Mammary epithelial cell (primary cell): ENCODE measurements at regions of chr6 and their contacts with region 1.

Region 1: DNA sequence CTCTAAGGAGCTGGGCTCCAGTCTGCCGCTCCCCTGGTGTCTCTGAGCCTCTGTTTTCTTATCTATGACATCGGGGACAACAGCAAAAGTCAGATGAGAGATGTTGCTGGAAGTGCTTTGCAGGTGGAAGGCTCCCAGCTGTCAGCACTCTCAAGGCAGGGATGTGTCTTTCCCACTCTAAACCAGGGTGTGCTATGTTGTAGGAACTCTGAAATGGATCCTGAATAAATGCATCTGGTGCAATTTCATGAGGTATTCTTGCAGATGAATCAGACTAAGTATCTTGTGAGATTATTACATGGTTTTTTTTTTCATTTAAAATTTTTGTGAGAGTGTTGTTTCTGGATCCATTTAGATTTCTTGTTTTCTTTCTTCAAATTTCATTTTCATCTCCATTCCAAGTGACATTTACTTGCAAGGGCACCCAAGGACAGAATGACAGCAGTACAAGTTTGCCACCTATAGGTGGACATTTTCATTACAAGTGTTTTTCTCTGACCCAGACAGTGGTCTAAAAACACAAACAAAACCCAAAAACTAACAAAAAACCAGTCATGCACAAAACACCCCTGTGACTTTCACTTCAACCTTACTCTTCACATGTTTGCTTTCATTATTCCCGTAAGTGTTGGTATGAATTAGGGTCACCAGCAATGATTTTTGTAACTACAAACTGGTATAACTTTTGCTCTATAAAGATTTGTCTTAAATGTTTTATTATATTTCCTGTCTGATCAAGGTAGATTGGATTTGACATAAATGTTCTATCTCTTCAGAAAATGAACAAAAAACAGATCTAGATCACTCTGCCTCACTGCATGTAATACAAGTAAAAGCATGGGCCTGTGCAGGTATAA is 14.7 kb upstream of the SIM1 start:
- DNase-seq: no peak
- H3K4me3 ChIP-seq: no peak overlapping the region
- H3K27ac ChIP-seq: no peak overlapping the region
- H3K4me1 ChIP-seq: no peaks in the 10 kb centered on the region
- H3K27me3 ChIP-seq: no peaks in the 10 kb centered on the region
- CTCF ChIP-seq: peak; percentile 70 to 76

Region 2: GRCh38 chr6:100105138-100105753 is 374.2 kb before region 1 on chr6:
- CTCF ChIA-PET with region 1: no interaction called
- dilution Hi-C with region 1: loop called (anchors 25 kb)
- in situ Hi-C with region 1: loop called (anchors 5 kb)
- intact Hi-C with region 1: loop called (anchors 2 kb)
- DNase-seq: no peak
- H3K4me3 ChIP-seq: no peak overlapping the region
- H3K27ac ChIP-seq: no peak overlapping the region
- H3K4me1 ChIP-seq: no peaks in the 10 kb centered on the region
- H3K27me3 ChIP-seq: peaks cover 3% of the 10 kb centered on the region
- CTCF ChIP-seq: no peak

Region 3: DNA sequence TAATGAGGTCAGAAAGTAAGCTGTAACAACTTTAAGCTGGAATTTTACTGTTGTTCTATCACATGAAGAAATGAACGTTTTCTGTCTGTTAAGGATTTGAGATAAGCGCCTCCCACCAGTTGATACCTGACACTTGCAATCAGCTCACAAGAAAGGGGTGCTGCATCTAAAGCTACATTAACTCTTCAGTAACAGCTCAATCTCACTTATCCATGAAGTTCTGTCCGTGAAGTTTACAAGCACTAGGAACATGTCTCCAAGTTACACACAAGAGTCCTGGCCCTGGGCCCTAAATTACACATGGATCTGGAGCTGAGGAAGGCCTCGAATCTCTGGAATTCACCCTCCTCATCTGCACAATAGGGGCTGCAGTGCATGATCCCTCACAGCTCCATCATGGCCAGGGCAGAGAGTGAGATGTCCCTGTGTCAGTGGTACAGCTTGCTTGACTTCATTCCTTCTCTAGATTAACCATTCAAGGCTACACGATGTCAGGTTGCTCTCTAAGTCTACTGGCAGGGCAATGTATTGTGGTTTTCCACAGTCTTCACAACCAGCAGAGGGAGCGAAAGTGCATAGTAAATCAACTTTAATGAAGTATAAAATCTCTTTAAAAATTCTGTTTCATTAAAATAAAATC is 303.0 kb before region 1 on chr6:
- CTCF ChIA-PET with region 1: no interaction called
- dilution Hi-C with region 1: no loop called
- in situ Hi-C with region 1: no loop called
- intact Hi-C with region 1: loop called (anchors 1 kb)
- DNase-seq: peak; percentile 30
- H3K4me3 ChIP-seq: no peak overlapping the region
- H3K27ac ChIP-seq: no peak overlapping the region
- H3K4me1 ChIP-seq: peaks cover 24% of the 10 kb centered on the region
- H3K27me3 ChIP-seq: no peaks in the 10 kb centered on the region
- CTCF ChIP-seq: peak; percentile 27 to 60

Region 4: DNA sequence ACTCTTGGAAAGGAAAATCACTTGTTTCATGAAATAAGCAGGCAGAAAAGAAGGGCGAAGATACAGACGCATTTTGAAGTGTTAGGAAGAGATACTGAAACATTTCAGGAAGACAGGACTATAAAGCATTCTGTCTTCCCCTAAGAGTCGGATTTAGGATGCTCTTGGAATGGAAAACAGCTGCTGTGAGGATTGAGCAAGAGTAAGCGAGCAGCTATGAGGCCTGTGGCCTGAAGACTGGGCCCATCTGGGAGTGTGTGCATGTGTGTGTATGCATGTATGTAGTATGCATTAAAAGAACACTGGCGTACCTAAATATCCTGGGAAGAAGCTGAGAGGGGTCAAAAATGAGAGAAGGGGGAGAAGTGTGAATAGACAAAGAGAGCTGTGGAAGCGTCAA is 98.3 kb before region 1 on chr6:
- CTCF ChIA-PET with region 1: no interaction called
- dilution Hi-C with region 1: no loop called
- in situ Hi-C with region 1: no loop called
- intact Hi-C with region 1: loop called (anchors 5 kb)
- DNase-seq: no peak
- H3K4me3 ChIP-seq: no peak overlapping the region
- H3K27ac ChIP-seq: no peak overlapping the region
- H3K4me1 ChIP-seq: peaks cover 20% of the 10 kb centered on the region
- H3K27me3 ChIP-seq: no peaks in the 10 kb centered on the region
- CTCF ChIP-seq: no peak

Region 5: DNA sequence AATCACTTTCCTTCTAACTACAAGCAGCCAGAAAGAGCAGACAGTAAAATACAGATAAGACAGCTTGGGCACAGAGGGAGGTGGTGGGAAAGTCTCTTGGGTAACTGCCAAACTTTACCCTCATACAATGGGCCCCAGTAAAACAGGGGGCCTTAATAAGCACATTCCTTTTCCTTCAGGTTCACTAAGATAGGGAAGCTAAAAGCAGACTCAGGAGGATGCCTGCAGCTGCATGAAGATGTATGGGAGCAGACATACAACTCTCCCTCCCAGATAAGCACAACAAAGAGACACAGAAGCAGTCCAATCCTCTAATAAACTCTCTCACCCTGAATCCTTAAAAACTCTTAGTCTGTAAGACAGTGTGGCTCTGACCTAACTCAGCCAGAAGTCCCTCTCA is 63.6 kb before region 1 on chr6:
- CTCF ChIA-PET with region 1: no interaction called
- dilution Hi-C with region 1: no loop called
- in situ Hi-C with region 1: no loop called
- intact Hi-C with region 1: no loop called
- DNase-seq: no peak
- H3K4me3 ChIP-seq: no peak overlapping the region
- H3K27ac ChIP-seq: no peak overlapping the region
- H3K4me1 ChIP-seq: no peaks in the 10 kb centered on the region
- H3K27me3 ChIP-seq: no peaks in the 10 kb centered on the region
- CTCF ChIP-seq: no peak

Region 6: GRCh38 chr6:100664274-100665040 is 185.1 kb after region 1 on chr6:
- CTCF ChIA-PET with region 1: no interaction called
- dilution Hi-C with region 1: no loop called
- in situ Hi-C with region 1: loop called in 1 of 2 experiments (anchors 10 kb)
- intact Hi-C with region 1: no loop called
- DNase-seq: peak; percentile 17
- H3K4me3 ChIP-seq: no peak overlapping the region
- H3K27ac ChIP-seq: peak overlapping the region; percentile 93
- H3K4me1 ChIP-seq: peaks cover 13% of the 10 kb centered on the region
- H3K27me3 ChIP-seq: no peaks in the 10 kb centered on the region
- CTCF ChIP-seq: peak; percentile 51 to 65